Activated naive CD4-positive, alpha-beta T cell treated with anti-CD3 and anti-CD28 coated beads for 36 hours (primary cell): ENCODE measurements at regions of chr17 and their contacts with region 1.

Region 1: GRCh38 chr17:19766422-19767270 is 18.5 kb upstream of the ALDH3A1 start:
- DNase-seq: peak; percentile 87
- H3K4me3 Mint-ChIP-seq: no peak overlapping the region
- H3K27ac Mint-ChIP-seq: peak overlapping the region; percentile 34
- H3K4me1 Mint-ChIP-seq: peaks cover 45% of the 10 kb centered on the region
- H3K27me3 Mint-ChIP-seq: no peaks in the 10 kb centered on the region

Region 2: DNA sequence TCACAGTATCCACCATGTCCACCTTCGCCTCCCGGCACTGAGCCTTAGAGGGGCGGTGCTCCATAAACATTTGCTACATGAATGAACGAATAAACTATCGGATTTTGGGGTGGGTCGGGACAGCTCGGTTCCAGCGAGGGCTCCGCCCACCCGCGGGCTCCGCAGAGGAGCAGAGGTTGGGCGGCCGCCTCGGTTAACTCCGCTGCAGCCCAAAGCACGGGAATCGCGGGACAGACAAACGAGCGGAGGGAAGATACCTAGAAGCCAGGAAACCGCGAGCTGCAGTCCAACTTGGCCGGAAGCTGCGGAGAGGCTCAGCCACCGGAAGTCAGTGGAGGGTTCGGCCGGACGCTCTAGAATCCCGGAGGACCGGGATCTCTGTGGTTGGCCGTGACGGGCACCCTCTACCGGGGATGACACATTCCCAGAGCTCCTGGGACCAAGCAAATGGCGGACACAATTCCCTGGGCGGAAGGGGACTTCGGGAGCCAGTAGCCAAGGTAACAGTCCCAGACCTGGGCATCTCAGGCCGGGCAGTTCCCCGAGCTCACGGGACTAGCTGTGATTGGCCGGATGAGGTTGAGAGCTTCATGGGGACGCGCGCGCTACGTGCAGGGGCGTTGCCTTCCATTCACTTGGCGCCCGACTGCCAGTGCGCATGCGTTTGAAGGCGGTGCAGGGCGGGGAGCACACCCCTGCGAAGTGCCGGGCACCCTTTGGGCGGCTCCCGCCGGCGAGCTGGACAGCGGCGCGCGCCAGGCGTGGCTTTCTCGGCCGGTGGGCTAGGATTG is 388.8 kb before region 1 on chr17:
- CTCF ChIA-PET with region 1: interaction called, 6 read pairs
- intact Hi-C with region 1: loop called (anchors 5 kb)
- DNase-seq: peak; percentile 95
- H3K4me3 Mint-ChIP-seq: peak overlapping the region; percentile 99
- H3K27ac Mint-ChIP-seq: peak overlapping the region; percentile 97
- H3K4me1 Mint-ChIP-seq: peaks cover 8% of the 10 kb centered on the region
- H3K27me3 Mint-ChIP-seq: no peaks in the 10 kb centered on the region

Region 3: GRCh38 chr17:19513897-19514488 is 252.7 kb before region 1 on chr17:
- CTCF ChIA-PET with region 1: interaction called, 75 read pairs
- intact Hi-C with region 1: loop called (anchors 1 kb)
- DNase-seq: peak; percentile 80
- H3K4me3 Mint-ChIP-seq: no peak overlapping the region
- H3K27ac Mint-ChIP-seq: no peak overlapping the region
- H3K4me1 Mint-ChIP-seq: no peaks in the 10 kb centered on the region
- H3K27me3 Mint-ChIP-seq: no peaks in the 10 kb centered on the region

Region 4: DNA sequence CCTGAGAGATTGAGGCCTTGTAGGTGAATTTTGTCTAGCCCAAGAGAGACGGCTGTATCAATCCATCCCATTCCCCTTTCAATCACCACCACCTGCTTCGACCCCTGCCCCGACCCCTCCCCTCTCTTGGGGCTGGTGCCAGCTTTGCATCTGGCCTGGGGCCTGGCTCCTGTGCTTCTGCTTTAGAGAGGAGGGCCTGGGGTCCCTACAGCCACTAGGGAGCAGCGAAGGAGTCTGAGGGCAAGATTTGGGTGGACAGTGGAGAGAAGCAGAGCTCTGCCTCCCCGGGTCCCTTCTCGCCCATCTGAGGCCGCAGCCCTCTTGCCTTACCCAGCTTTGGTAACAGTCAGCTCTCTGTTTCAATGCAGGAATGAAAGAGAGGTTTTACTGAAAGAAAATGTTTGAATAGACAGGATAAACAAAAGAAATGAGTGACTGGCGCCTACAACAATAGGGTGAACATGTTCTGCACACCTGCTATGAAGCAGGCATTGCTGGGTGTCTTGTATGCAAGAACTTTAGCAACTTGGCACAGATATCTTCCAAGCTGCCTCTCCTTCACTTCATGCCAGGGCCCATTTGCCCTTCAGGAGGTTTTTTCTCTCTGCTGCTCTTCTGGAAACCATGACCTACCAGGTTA is 175.6 kb before region 1 on chr17:
- CTCF ChIA-PET with region 1: no interaction called
- intact Hi-C with region 1: loop called (anchors 5 kb)
- DNase-seq: no peak
- H3K4me3 Mint-ChIP-seq: no peak overlapping the region
- H3K27ac Mint-ChIP-seq: no peak overlapping the region
- H3K4me1 Mint-ChIP-seq: no peaks in the 10 kb centered on the region
- H3K27me3 Mint-ChIP-seq: no peaks in the 10 kb centered on the region

Region 5: DNA sequence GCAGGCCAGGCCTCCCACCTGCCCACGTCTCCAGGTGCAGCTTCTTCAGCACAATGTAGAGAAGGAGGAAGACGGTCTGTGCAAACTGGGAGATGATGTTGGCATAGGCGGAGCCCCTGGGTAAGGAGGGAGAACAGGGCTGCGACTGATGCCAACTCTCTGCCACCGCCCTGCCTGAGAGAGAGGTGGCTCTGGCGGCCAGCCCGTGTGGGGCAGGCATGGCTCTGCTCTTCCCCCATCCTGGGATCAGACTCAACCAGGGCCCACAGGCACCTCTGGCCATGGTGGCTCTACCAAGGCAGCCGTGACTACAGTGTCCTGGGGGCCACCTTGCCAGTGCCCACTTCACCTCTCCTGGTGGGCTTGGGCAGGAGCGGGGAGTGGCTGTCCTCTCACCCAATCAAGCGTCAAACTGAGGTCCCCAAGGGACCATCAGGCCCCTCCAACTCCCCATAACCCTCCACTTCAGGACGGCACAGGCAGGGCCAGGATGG is 58.9 kb before region 1 on chr17:
- CTCF ChIA-PET with region 1: no interaction called
- intact Hi-C with region 1: no loop called
- DNase-seq: no peak
- H3K4me3 Mint-ChIP-seq: no peak overlapping the region
- H3K27ac Mint-ChIP-seq: no peak overlapping the region
- H3K4me1 Mint-ChIP-seq: no peaks in the 10 kb centered on the region
- H3K27me3 Mint-ChIP-seq: no peaks in the 10 kb centered on the region

Region 6: GRCh38 chr17:19724501-19725420 is 41.9 kb before region 1 on chr17:
- CTCF ChIA-PET with region 1: interaction called, 7 read pairs
- intact Hi-C with region 1: loop called (anchors 5 kb)
- DNase-seq: peak; percentile 75
- H3K4me3 Mint-ChIP-seq: peak overlapping the region; percentile 25
- H3K27ac Mint-ChIP-seq: no peak overlapping the region
- H3K4me1 Mint-ChIP-seq: peaks cover 16% of the 10 kb centered on the region
- H3K27me3 Mint-ChIP-seq: no peaks in the 10 kb centered on the region

Region 7: GRCh38 chr17:19753049-19753444 is 13.6 kb before region 1 on chr17:
- CTCF ChIA-PET with region 1: interaction called, 14 read pairs
- intact Hi-C with region 1: no loop called
- DNase-seq: no peak
- H3K4me3 Mint-ChIP-seq: no peak overlapping the region
- H3K27ac Mint-ChIP-seq: no peak overlapping the region
- H3K4me1 Mint-ChIP-seq: peaks cover 6% of the 10 kb centered on the region
- H3K27me3 Mint-ChIP-seq: peaks cover 4% of the 10 kb centered on the region